K562 (cell line): ENCODE measurements at regions of chr1 and their contacts with region 1.

Region 1: GRCh38 chr1:46622344-46622743 is 5.7 kb upstream of the MOB3C start:
- DNase-seq: peak; percentile 69 to 76 (median 71)
- ATAC-seq: peak; percentile 83
- H3K4me3 ChIP-seq: no peak overlapping the region
- H3K27ac ChIP-seq: no peak overlapping the region
- H3K4me1 ChIP-seq: peaks cover 9 to 15% of the 10 kb centered on the region in 2 experiments
- H3K27me3 ChIP-seq: no peaks in the 10 kb centered on the region
- CTCF ChIP-seq: peak; percentile 82 to 92 (median 88)
- EP300 ChIP-seq: no peak
- POLR2A ChIP-seq: no peak
- RAD21 ChIP-seq: peak; percentile 78 to 92

Region 2: DNA sequence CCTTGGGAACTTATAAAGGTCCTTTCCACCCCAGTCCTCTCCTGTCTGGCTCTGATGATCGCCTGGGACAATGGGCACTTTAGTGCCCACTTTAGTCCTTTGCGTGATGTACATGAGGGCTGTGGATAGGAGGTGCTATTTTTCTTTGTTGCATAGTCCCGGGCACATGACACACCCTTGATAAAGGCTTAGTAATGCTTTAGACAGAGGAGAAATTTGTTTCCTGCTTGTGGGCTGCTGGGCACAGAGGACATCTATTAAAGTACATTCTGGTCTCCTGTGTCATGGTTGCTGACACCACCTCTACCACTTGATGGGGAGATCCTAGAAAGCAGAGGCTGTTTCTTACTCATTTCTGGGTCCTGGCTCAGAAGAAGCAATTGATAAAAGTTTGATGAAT is 65.5 kb before region 1 on chr1:
- CTCF ChIA-PET with region 1: interaction called, 3 read pairs
- POLR2A ChIA-PET with region 1: no interaction called
- in situ Hi-C with region 1: no loop called
- intact Hi-C with region 1: loop called (anchors 5 kb)
- DNase-seq: no peak
- ATAC-seq: peak; percentile 53
- H3K4me3 ChIP-seq: no peak overlapping the region
- H3K27ac ChIP-seq: no peak overlapping the region
- H3K4me1 ChIP-seq: peaks cover 6 to 13% of the 10 kb centered on the region in 2 experiments; a peak in 3 of 5 replicates
- H3K27me3 ChIP-seq: peaks cover 2 to 7% of the 10 kb centered on the region in 2 experiments; a peak in 3 of 5 replicates
- CTCF ChIP-seq: peak; percentile 5 to 51 (median 27); a peak in 3 of 6 replicates
- EP300 ChIP-seq: no peak
- POLR2A ChIP-seq: no peak
- RAD21 ChIP-seq: peak in 1 of 2 experiments; percentile 37; a peak in 2 of 4 replicates

Region 3: DNA sequence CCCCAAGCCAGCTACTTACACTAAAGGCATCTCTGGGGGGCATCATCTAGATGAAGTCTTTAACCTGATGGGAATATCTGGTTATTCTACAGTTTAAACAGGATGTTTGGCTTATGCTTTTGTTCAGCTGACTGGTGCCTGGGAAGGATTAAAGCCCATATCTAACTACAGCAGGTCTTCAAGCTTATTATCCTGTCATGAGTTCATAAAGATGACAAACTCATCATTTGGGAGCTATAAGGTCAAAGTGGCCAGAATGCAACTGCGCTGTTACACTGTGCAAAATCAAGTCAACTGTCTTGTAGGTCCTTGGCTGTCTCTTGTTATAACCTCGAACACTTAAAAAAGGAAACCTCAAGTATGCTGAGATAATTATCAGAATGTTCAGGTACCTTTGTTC is 12.9 kb after region 1 on chr1:
- CTCF ChIA-PET with region 1: no interaction called
- POLR2A ChIA-PET with region 1: interaction called, 12 read pairs
- in situ Hi-C with region 1: no loop called
- intact Hi-C with region 1: no loop called
- DNase-seq: no peak
- ATAC-seq: peak; percentile 38; the same call in 2 of the 3 replicates
- H3K4me3 ChIP-seq: no peak overlapping the region
- H3K27ac ChIP-seq: no peak overlapping the region
- H3K4me1 ChIP-seq: peaks cover 0 to 6% of the 10 kb centered on the region in 2 experiments; a peak in 2 of 5 replicates
- H3K27me3 ChIP-seq: no peaks in the 10 kb centered on the region
- CTCF ChIP-seq: no peak
- EP300 ChIP-seq: peak; percentile 48; the same call in 1 of the 2 replicates
- POLR2A ChIP-seq: no peak
- RAD21 ChIP-seq: no peak; a peak in 1 of 4 replicates

Region 4: GRCh38 chr1:46830665-46831322 is 208.4 kb after region 1 on chr1:
- CTCF ChIA-PET with region 1: no interaction called
- POLR2A ChIA-PET with region 1: no interaction called
- in situ Hi-C with region 1: no loop called
- intact Hi-C with region 1: no loop called
- DNase-seq: no peak
- ATAC-seq: no peak
- H3K4me3 ChIP-seq: no peak overlapping the region
- H3K27ac ChIP-seq: no peak overlapping the region
- H3K4me1 ChIP-seq: no peaks in the 10 kb centered on the region
- H3K27me3 ChIP-seq: no peaks in the 10 kb centered on the region; a peak in 1 of 5 replicates
- CTCF ChIP-seq: no peak
- EP300 ChIP-seq: no peak
- POLR2A ChIP-seq: no peak
- RAD21 ChIP-seq: no peak